Activated T-helper 2 cell treated with anti-CD3 and anti-CD28 coated beads, Interferon-gamma antibody, Interleukin-2, Interleukin-4, amounts not matched to agents 10 μg/mL and 5 μg/mL and 100 μg/mL, durations not matched to agents 14 hours and 24 hours and 36 hours (primary cell): ENCODE measurements at regions of chr6 and their contacts with region 1.

Region 1: GRCh38 chr6:159042003-159042825 is 2.6 kb downstream of the TAGAP start:
- DNase-seq: peak; percentile 76
- H3K4me3 Mint-ChIP-seq: peak overlapping the region; percentile 96
- H3K27ac Mint-ChIP-seq: peak overlapping the region; percentile 98
- H3K4me1 Mint-ChIP-seq: peaks cover 54% of the 10 kb centered on the region
- H3K27me3 Mint-ChIP-seq: no peaks in the 10 kb centered on the region

Region 2: DNA sequence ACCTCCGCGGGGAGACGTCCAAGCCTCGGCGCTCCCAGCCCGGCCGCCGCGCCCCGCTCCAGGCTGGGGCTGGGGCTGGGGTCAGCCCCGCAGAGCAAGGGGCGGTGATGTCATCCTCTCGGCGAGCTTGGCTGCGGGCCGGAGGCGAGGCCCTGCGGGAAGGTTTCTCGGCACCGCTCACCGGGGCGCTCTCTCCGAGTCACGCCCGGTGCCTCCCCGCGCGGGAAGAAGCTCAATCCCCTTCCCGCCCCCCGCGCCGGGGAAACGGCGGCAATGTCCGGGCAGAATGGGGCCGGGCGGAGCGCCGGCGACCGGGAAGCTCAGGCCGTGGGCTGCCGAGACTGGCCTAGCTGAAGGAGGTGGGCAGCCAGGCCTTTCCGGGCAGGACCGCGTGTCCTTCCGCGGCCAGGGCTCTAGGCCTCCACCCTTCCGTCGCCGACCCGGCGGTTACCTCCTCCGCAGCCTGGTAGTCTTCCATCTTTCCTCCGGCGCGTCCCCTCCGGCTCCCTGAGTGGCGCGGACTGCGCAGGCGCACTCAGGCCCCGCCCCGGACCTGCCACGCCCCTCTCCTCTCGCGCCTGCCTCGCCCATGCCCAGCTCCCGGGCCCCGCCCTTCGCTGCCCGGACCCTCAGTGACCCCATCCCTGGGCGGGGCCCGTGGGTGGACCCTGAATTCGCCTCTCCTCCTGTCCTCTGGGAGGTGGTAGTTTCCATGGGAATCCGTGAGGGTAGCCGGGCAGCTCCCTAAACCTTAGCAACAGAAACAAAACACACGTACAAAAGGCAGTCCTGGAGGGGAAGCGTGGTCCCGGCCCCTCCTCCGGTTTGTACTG is 397.8 kb before region 1 on chr6 and contains the start of gene DYNLT1:
- intact Hi-C with region 1: loop called (anchors 10 kb)
- DNase-seq: peak; percentile 88
- H3K4me3 Mint-ChIP-seq: peak within 1 kb of the TSS; percentile 97
- H3K27ac Mint-ChIP-seq: peak within 1 kb of the TSS; percentile 97
- H3K4me1 Mint-ChIP-seq: peaks cover 69% of the 10 kb centered on the region
- H3K27me3 Mint-ChIP-seq: no peaks in the 10 kb centered on the region
- total RNA-seq, gene DYNLT1: 94.4 and 108 TPM in 2 replicates

Region 3: DNA sequence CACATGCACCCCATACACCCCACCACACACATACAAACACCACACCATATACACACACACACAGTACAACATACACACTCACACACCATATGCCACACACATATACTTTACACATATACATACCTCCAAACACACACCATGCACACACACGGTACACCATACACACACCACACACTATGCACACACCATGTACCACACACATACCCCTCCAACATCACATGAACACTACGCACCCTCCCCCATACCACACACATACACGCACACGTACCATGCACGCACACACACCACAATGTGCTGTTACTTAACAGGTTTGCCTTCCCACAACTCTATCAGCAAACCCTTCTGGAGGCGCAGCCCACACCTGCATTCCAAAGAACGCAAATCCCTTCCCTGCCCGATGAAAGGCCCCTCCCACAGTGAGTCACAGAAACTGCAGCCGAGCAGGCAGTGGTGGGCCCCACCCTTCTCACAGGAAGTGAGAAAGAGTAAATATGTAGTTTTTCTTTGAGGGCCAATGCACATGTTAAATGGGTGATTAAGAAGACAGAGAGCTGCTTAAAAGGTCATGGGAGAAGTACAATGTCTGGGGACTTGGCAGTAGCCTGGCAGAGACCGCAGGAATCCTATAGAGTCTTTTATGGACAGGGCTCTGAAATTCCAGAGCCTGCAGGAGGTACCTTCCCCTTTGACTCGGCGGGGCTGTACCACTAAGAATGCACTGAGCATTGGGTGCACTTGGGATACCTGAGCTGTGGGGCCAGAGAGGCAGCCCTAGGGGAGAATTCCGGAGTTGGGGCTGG is 188.9 kb before region 1 on chr6:
- intact Hi-C with region 1: loop called (anchors 5 kb)
- DNase-seq: peak; percentile 86
- H3K4me3 Mint-ChIP-seq: no peak overlapping the region
- H3K27ac Mint-ChIP-seq: no peak overlapping the region
- H3K4me1 Mint-ChIP-seq: peaks cover 29% of the 10 kb centered on the region
- H3K27me3 Mint-ChIP-seq: no peaks in the 10 kb centered on the region

Region 4: GRCh38 chr6:159017757-159018559 is 24.3 kb before region 1 on chr6:
- intact Hi-C with region 1: loop called (anchors 1 kb)
- DNase-seq: no peak
- H3K4me3 Mint-ChIP-seq: peak overlapping the region; percentile 1
- H3K27ac Mint-ChIP-seq: peak overlapping the region; percentile 84
- H3K4me1 Mint-ChIP-seq: peaks cover 45% of the 10 kb centered on the region
- H3K27me3 Mint-ChIP-seq: no peaks in the 10 kb centered on the region

Region 5: DNA sequence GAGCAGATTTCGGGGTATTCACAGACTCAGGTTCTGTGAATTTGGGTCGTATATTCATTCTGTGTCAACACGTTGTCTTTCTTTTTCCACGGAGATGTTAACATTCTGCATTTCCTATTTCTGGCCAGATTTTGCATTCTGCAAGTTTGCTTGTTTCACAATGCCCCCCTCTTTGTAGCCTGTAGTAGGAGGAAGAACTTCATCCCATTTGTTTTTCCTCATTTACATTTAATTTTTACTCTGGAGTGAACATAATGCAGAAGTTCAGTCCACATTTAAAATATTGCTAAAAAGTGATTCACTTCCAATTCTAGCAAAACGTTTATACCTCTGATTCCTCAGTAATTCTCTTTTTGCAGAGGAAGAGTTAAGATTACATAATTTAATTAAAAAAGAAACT is 10.4 kb before region 1 on chr6:
- intact Hi-C with region 1: no loop called
- DNase-seq: no peak
- H3K4me3 Mint-ChIP-seq: no peak overlapping the region
- H3K27ac Mint-ChIP-seq: no peak overlapping the region
- H3K4me1 Mint-ChIP-seq: peaks cover 4% of the 10 kb centered on the region
- H3K27me3 Mint-ChIP-seq: no peaks in the 10 kb centered on the region

Region 6: GRCh38 chr6:159104163-159104925 is 62.1 kb after region 1 on chr6:
- intact Hi-C with region 1: loop called (anchors 1 kb)
- DNase-seq: peak; percentile 69
- H3K4me3 Mint-ChIP-seq: peak overlapping the region; percentile 11
- H3K27ac Mint-ChIP-seq: peak overlapping the region; percentile 79
- H3K4me1 Mint-ChIP-seq: peaks cover 75% of the 10 kb centered on the region
- H3K27me3 Mint-ChIP-seq: no peaks in the 10 kb centered on the region